Transverse colon (tissue), 4 donors: ENCODE measurements at regions of chr11 and their contacts with region 1.

Region 1: GRCh38 chr11:134124660-134125451 is 56.0 kb downstream of the JAM3 start:
- DNase-seq: no peak
- H3K4me3 ChIP-seq: peak overlapping the region; percentile 16 to 33 (median 20)
- H3K27ac ChIP-seq: peak overlapping the region; percentile 61 to 77 (median 64)
- H3K4me1 ChIP-seq: peaks cover 4 to 23% (median 17%) of the 10 kb centered on the region in 4 donors
- H3K27me3 ChIP-seq: peaks cover 39% of the 10 kb centered on the region
- CTCF ChIP-seq: no peak
- EP300 ChIP-seq: no peak
- POLR2A ChIP-seq: no peak

Region 2: DNA sequence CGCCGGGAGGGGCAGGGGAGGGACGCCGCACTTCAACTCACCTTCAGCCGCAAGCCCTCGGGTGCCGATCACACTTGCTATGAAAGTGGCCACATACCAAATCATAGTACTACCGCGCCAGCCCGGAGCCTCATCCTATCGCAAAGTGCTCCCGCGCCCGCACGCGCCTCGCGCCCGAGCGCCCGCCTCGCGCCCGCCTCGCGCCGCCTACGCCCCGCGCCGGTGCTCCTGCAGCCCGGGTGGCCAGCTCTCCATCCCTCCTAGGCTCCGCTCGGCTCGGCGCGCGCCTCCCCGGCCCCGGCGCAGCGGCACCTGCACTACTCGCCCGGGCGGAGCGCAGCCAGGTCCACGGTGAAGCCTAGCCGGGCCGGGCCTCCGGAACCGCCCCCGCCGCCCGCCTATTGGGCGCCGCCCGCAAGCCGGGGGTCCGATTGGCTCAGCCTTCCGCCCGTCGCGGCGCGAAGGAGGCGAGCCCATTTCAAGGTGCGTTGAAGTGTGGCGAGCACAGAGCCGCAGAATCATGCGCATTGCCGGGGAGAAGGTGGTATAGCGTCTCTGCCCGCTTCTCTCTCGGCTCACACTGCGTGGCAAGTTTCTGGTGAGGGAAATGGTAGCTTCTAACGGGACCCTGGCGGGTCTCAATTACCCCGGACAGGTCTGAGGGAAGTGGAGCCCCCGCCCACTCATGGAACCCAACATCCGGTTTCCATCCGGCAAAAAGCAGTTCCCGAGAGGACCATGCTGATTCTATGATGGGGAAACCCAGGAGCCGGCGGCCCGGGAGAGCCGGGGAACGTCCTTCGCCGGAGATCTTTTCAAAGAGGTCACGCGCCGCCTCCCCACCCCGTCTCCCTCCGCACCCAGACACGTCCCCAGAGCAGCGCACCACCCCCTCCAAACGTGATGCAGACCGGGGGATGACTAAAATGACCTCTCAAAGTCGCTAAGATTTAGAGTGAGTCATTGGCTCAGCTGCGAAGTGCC is 167.9 kb before region 1 on chr11 and contains the start of gene IGSF9B:
- in situ Hi-C with region 1: no loop called
- intact Hi-C with region 1: loop called (anchors 10 kb)
- DNase-seq: peak; percentile 89
- H3K4me3 ChIP-seq: peak within 1 kb of the TSS; percentile 62 to 65 (median 63)
- H3K27ac ChIP-seq: peak within 1 kb of the TSS; percentile 67 to 89 (median 87)
- H3K4me1 ChIP-seq: peaks cover 0 to 44% (median 27%) of the 10 kb centered on the region in 4 donors
- H3K27me3 ChIP-seq: peaks cover 34% of the 10 kb centered on the region
- CTCF ChIP-seq: no peak
- EP300 ChIP-seq: no peak
- POLR2A ChIP-seq: no peak
- total RNA-seq, gene IGSF9B: 2.6 to 15.3 (median 4.9) TPM

Region 3: DNA sequence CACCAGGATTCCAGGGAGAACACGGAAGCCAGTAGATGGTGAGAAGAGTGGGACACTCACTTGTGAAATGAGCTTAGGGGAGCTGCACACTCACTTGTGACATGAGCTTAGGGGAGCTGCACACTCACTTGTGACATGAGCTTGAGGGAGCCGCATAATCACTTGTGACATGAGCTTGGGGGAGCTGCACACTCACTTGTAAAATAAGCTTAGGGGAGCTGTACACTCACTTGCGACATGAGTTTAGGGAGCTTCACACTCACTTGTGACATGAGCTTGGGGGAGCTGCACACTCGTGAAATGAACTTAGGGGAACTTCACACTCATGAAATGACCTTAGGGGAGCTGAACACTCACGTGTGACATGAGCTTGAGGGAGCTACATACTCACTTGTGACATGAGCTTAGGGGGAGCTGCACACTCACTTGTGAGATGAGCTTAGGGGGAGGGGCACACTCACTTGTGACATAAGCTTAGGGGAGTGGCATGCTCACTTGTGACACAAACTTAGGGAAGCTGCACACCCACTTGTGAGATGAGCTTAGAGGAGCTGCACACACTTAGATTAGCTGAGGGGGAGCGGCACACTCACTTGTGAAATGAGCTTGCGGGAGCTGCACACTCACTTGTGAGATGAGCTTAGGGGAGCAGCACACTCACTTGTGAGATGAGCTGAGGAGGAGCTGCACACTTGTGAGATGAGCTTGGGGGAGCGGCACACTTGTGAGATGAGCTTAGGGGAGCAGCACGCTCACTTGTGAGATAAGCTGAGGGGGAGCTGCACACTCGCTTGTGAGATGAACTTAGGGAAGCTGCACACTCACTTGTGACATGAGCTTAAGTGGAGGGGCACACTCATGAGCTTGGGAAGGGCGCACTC is 39.9 kb after region 1 on chr11:
- in situ Hi-C with region 1: no loop called
- intact Hi-C with region 1: no loop called
- DNase-seq: no peak
- H3K4me3 ChIP-seq: no peak overlapping the region
- H3K27ac ChIP-seq: no peak overlapping the region
- H3K4me1 ChIP-seq: no peaks in the 10 kb centered on the region
- H3K27me3 ChIP-seq: no peaks in the 10 kb centered on the region
- CTCF ChIP-seq: no peak
- EP300 ChIP-seq: no peak
- POLR2A ChIP-seq: no peak